ENCODE measurements at regions of chr1 and their contacts with region 1.

Region 1: GRCh38 chr1:38608202-38608864 is 251.2 kb downstream of the RRAGC start:
- DNase-seq: no peak
- ATAC-seq: no peak
- H3K4me3 ChIP-seq: no peak overlapping the region
- H3K27ac ChIP-seq: no peak overlapping the region
- H3K4me1 ChIP-seq: no peaks in the 10 kb centered on the region
- H3K27me3 ChIP-seq: no peaks in the 10 kb centered on the region

Region 2: DNA sequence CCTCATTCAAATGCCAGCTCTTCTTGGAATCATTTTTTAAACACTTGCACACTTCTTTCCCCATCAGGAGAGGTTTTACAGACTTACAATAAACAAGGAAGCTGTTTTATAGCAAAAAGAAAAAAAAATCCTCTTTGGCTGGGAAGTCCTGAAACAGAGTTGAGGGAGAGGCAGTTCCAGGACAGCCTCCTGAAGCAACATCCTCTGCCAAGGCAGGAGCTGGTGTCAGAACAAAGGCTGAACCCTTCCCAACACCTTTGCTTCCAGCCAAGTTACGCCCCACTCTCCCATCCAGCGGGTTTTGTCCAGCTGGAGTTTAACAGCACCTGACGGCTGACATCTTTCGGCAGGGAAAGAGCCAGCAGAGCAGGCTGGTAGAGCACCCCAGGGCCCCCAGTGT is 36.6 kb before region 1 on chr1:
- intact Hi-C with region 1: no loop called
- DNase-seq: no peak
- ATAC-seq: peak; percentile 47
- H3K4me3 ChIP-seq: no peak overlapping the region
- H3K27ac ChIP-seq: no peak overlapping the region
- H3K4me1 ChIP-seq: no peaks in the 10 kb centered on the region
- H3K27me3 ChIP-seq: no peaks in the 10 kb centered on the region

Region 3: DNA sequence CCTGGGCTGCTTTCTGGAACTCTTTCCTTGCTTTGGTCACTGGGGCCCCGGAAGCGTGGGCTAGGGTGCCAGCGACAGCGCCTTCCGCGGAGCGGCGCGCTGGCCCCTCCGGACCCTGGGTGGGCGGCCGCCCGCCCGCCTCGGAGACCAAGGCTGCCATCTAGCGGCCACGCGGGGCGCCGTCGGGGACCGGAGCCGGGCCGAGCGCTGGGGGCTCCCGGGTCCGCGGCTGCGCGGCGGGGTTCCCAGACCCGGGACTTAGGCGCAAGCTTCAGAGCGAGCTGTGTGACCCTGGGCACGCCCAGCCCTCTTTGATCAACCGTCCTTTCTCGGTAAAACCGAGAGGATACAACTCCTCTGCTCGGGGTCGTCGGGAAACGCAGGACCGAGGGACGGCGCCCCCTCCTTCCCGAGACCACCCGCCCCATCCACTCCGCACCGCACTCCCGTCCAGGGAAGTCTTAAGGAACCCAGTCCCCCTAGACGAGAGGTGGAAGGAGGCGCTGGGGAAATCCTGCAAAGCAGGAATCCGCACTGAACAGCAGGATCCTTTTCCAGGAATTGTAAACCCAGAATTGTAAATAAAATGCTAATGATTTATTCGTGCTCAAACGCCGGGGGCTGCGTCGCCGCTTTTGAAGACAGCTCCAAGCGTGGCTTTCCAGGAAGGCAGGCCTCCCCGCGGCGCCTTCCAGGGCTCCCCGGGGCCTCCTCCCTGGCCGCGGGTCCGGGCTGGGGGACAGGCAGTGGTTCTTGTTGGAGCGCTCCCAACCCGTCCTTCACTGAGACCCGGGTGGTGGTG is 210.0 kb after region 1 on chr1:
- intact Hi-C with region 1: loop called (anchors 10 kb)
- DNase-seq: peak in 1 of 2 donors; percentile 82
- ATAC-seq: peak; percentile 72
- H3K4me3 ChIP-seq: no peak overlapping the region
- H3K27ac ChIP-seq: no peak overlapping the region
- H3K4me1 ChIP-seq: no peaks in the 10 kb centered on the region
- H3K27me3 ChIP-seq: no peaks in the 10 kb centered on the region